Endothelial cell of umbilical vein (primary cell): ENCODE measurements at regions of chr11 and their contacts with region 1.

Region 1: GRCh38 chr11:3854977-3855807 is at the start of gene STIM1:
- DNase-seq: peak; percentile 94
- H3K4me3 ChIP-seq: peak within 1 kb of the TSS; percentile 33 to 88 (median 68)
- H3K27ac ChIP-seq: peak within 1 kb of the TSS; percentile 67
- H3K4me1 ChIP-seq: peaks cover 15% of the 10 kb centered on the region
- H3K27me3 ChIP-seq: no peaks in the 10 kb centered on the region
- CTCF ChIP-seq: peak; percentile 95 to 97
- POLR2A ChIP-seq: peak; percentile 49
- total RNA-seq, gene STIM1: 30.9 and 32.7 TPM in 2 replicates

Region 2: DNA sequence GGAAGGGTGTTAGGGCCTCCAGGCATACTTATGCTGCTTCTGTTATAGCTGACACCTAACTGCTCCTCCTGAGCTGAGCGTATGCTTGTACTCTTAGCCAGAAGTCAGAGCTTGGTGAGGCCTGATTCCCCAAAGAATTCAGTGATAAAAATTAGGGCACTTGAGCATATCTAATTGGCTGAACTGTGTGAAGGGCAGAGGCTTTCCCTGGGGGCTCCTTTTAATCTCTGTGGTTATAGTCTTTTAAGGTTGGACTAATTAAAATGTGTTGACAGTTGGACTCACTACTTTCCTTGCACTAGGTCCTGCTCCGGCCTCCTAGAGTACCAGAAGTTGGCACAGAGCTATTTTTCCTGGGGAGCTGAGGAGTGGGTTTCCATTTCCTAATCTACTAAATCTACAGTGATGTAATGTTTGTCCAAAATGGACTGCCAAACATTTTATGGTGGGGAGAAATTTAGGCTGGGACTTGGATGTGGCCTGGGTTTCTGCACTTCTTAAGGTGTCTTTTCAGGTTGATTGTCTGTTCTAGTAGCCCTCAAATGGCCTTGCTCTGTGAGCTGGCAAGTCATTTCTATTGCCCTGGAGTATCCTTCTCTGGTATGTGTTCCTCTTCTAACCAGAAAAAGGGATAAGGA is 18.6 kb after region 1 on chr11:
- CTCF ChIA-PET with region 1: interaction called, 34 read pairs
- POLR2A ChIA-PET with region 1: no interaction called
- dilution Hi-C with region 1: no loop called
- intact Hi-C with region 1: no loop called
- DNase-seq: no peak
- H3K4me3 ChIP-seq: no peak overlapping the region
- H3K27ac ChIP-seq: no peak overlapping the region
- H3K4me1 ChIP-seq: peaks cover 4% of the 10 kb centered on the region
- H3K27me3 ChIP-seq: no peaks in the 10 kb centered on the region
- CTCF ChIP-seq: no peak
- POLR2A ChIP-seq: no peak

Region 3: DNA sequence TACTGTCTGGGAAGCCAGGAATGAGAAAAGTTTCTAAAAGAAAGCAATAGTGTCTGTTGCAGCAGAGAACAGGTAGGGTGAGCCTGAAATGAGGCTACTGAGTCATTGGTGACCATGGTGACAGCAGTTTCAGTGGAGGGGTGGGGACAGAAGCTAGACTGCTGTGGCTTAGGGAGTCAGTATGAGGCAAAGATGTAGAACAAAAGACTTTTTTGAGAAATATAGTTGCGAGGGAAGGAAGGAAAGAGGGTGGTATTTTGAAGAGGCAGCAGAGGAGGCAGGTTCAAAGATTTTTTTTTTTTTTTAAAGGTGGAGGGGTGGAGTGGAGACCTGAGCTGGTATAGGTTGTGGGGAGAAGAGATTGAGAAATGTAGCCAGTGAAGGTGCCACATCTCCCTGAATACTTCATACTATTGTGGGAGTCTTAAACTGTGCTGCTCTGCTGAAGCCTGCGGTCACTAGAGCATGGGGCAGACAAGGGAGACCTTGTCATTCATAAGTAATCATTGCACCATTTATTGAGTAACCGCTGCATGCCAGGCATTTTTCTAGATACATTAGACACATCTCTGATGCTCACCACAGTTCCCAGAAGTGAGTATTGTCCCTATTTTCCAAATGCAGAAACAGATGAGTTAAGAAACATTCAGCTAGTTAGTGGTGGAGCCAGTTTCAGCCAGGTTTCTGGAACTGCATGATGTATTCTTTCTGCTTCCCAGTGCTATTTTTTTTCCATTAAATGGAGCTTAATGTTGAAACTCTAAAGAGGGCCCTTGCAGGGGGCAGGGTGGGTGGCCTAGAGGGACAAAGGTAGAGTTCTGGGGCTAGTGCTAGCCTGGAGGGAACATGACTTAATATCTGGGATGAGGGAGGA is 50.1 kb after region 1 on chr11:
- CTCF ChIA-PET with region 1: interaction called, 13 read pairs
- POLR2A ChIA-PET with region 1: no interaction called
- dilution Hi-C with region 1: no loop called
- intact Hi-C with region 1: no loop called
- DNase-seq: no peak
- H3K4me3 ChIP-seq: no peak overlapping the region
- H3K27ac ChIP-seq: no peak overlapping the region
- H3K4me1 ChIP-seq: peaks cover 4% of the 10 kb centered on the region
- H3K27me3 ChIP-seq: no peaks in the 10 kb centered on the region
- CTCF ChIP-seq: no peak
- POLR2A ChIP-seq: no peak

Region 4: GRCh38 chr11:3947061-3947460 is 91.9 kb after region 1 on chr11:
- CTCF ChIA-PET with region 1: interaction called, 12 read pairs
- POLR2A ChIA-PET with region 1: no interaction called
- dilution Hi-C with region 1: no loop called
- intact Hi-C with region 1: loop called (anchors 5 kb)
- DNase-seq: peak; percentile 77
- H3K4me3 ChIP-seq: no peak overlapping the region
- H3K27ac ChIP-seq: no peak overlapping the region
- H3K4me1 ChIP-seq: peaks cover 18% of the 10 kb centered on the region
- H3K27me3 ChIP-seq: no peaks in the 10 kb centered on the region
- CTCF ChIP-seq: no peak
- POLR2A ChIP-seq: no peak

Region 5: DNA sequence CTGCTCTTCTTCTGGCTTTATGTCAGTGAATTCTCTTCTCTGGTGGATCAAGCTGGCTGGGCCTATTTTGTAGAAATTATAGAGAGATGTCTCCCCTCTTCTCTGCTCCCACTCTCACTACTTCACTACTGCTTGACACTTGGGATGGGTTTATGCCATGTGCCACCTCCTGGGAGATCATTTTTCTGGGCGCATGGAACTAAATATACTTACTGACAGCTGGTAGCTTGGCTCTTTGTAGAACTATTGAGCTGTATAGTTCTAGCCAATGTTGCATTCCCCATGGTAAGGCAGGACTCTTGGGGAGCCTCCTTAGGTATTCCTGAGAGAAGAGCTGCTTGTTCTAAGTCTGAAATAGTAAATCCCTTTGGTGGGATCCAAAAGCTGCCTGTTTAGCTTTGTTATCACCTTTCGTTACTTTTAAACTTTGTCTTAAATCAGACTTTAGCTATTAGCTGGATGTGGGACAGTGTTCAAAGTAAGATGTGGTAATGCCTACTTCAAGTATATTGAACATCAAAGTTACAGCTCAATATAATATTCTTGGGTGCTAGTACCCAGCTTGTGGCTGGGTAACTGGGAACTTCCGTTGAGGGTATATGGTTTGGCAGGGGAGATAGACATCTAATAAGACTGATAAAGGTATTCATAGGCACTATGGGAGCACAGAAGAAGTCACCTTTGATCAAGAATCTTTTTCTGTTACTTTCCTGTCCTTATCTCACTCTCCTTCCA is 151.9 kb after region 1 on chr11:
- CTCF ChIA-PET with region 1: interaction called, 11 read pairs
- POLR2A ChIA-PET with region 1: no interaction called
- dilution Hi-C with region 1: no loop called
- intact Hi-C with region 1: no loop called
- DNase-seq: no peak
- H3K4me3 ChIP-seq: no peak overlapping the region
- H3K27ac ChIP-seq: no peak overlapping the region
- H3K4me1 ChIP-seq: no peaks in the 10 kb centered on the region
- H3K27me3 ChIP-seq: no peaks in the 10 kb centered on the region
- CTCF ChIP-seq: no peak
- POLR2A ChIP-seq: no peak

Region 6: GRCh38 chr11:4072668-4073285 is 217.6 kb after region 1 on chr11:
- CTCF ChIA-PET with region 1: interaction called, 871 read pairs
- POLR2A ChIA-PET with region 1: no interaction called
- dilution Hi-C with region 1: loop called (anchors 25 kb)
- intact Hi-C with region 1: loop called (anchors 1 kb)
- DNase-seq: peak; percentile 79
- H3K4me3 ChIP-seq: no peak overlapping the region
- H3K27ac ChIP-seq: no peak overlapping the region
- H3K4me1 ChIP-seq: no peaks in the 10 kb centered on the region
- H3K27me3 ChIP-seq: no peaks in the 10 kb centered on the region
- CTCF ChIP-seq: peak; percentile 59 to 64
- POLR2A ChIP-seq: no peak